ENCODE measurements at regions of chr14 and their contacts with region 1.

Region 1: GRCh38 chr14:22986508-22987054 is 4.2 kb upstream of the AJUBA start:
- DNase-seq: peak; percentile 75
- H3K27ac ChIP-seq: no peak overlapping the region
- CTCF ChIP-seq: peak; percentile 93

Region 2: GRCh38 chr14:22973217-22974032 is 13.2 kb before region 1 on chr14:
- CTCF ChIA-PET with region 1: interaction called, 22 read pairs
- POLR2A ChIA-PET with region 1: interaction called, 3 read pairs
- DNase-seq: no peak
- H3K27ac ChIP-seq: peak overlapping the region; percentile 99
- CTCF ChIP-seq: peak; percentile 75

Region 3: GRCh38 chr14:23000860-23001259 is 14.3 kb after region 1 on chr14:
- CTCF ChIA-PET with region 1: interaction called, 30 read pairs
- POLR2A ChIA-PET with region 1: no interaction called
- DNase-seq: no peak
- H3K27ac ChIP-seq: no peak overlapping the region
- CTCF ChIP-seq: no peak

Region 4: DNA sequence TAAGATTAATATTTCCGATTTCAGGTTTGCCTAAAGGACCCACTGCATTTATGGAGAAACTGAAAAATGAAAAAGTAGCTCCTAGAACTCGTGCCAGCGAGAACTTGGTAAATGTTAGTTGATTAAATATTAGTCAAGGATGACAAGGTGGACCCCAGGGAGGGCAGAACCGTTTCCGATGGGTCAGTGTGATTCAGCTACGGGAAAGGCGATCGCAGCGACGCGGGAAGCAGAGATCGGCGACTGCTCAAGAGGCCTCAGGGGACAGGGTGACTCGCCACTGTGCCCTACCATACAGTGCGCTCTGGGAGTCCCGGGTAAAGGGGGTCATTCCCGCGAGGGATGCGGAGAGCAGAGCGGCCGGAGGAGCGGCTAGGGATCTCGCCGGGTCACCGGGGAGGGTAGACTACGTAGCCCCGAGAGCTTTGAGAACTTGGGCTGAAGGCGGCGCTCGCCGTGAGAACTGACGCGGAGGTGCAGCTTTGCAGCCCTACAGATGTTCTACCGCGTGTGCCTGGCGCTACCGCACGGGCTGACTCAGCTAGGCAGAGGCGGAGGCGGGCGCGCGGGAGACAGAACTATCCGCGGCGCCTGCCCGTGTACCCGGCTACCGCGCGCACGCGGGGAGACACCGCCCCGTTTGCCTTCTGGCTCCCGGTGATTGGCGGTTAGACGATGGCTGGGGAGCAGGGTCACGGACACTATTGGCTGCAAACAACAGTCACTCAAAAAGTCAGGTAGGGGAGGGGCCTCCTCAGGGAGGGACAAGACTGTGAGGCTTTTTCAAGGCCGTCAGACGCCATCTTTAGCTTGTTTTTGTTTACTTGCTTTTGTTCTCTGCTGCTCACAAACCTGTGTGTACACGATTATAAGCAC is 20.2 kb after region 1 on chr14:
- CTCF ChIA-PET with region 1: interaction called, 22 read pairs
- POLR2A ChIA-PET with region 1: interaction called, 5 read pairs
- DNase-seq: peak; percentile 100
- H3K27ac ChIP-seq: peak overlapping the region; percentile 96
- CTCF ChIP-seq: peak; percentile 39

Region 5: GRCh38 chr14:23034483-23035302 is 48.1 kb after region 1 on chr14 and contains the start of gene PSMB5:
- CTCF ChIA-PET with region 1: interaction called, 13 read pairs
- POLR2A ChIA-PET with region 1: no interaction called
- DNase-seq: peak; percentile 95
- H3K27ac ChIP-seq: peak within 1 kb of the TSS; percentile 83
- CTCF ChIP-seq: no peak

Region 6: DNA sequence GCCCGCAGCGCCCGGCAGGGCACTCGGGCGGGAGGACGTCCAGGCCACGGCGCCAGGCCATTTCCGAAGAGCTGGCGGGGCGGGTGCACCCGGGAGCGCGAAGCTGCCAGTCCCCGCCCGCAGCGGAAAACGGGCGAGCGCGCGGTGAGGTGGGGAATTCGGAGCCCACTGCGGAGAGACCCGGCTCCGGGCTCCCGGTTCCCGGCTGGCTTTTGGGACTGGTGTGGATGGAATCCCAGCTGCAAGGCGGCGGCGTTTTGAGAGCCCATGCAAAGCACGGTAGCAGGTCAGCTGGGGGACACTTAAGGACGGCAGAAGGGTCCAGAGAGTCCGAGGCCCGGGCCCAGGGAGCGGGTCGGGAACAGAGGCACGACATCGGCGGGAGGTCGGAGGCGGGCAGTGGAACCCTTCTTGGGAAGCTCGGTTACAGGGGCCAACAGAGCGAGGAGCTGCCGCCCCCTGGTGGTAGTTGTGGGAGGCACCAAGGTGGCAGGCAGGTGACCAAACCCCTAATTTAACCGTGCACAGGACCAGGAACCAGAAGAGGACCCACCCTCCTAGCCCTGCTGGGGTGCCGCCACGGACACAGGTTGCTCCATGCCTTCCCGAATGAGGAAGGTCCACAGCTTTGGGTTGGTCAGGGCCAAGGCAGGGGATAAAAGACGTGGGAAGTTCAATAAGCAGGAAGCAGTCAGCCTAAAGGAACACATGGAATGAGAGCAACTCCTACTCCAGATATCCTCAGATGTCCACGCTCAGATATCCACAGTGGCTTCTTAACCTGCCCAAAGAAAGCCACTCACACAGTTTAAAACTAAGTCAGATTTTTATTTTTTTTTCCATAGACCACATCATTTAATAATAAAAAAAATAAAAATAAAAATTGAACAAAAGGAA is 71.4 kb after region 1 on chr14:
- CTCF ChIA-PET with region 1: interaction called, 69 read pairs
- POLR2A ChIA-PET with region 1: interaction called, 7 read pairs
- DNase-seq: peak; percentile 84
- H3K27ac ChIP-seq: peak overlapping the region; percentile 95
- CTCF ChIP-seq: peak; percentile 93

Region 7: GRCh38 chr14:23109769-23110168 is 123.2 kb after region 1 on chr14:
- CTCF ChIA-PET with region 1: interaction called, 12 read pairs
- POLR2A ChIA-PET with region 1: interaction called, 5 read pairs
- DNase-seq: no peak
- H3K27ac ChIP-seq: no peak overlapping the region
- CTCF ChIP-seq: no peak